ENCODE measurements at regions of chr16 and their contacts with region 1.

Region 1: GRCh38 chr16:57300387-57301125 is 16.1 kb upstream of the PLLP start:
- DNase-seq: peak; percentile 100
- ATAC-seq: peak; percentile 92
- H3K4me3 Mint-ChIP-seq: no peak overlapping the region
- H3K27ac Mint-ChIP-seq: no peak overlapping the region
- H3K4me1 Mint-ChIP-seq: peaks cover 32% of the 10 kb centered on the region
- H3K27me3 Mint-ChIP-seq: no peaks in the 10 kb centered on the region
- CTCF ChIP-seq: peak; percentile 75

Region 2: GRCh38 chr16:57091975-57092785 is 208.4 kb before region 1 on chr16 and contains the start of gene CPNE2:
- CTCF ChIA-PET with region 1: interaction called, 3 read pairs
- POLR2A ChIA-PET with region 1: no interaction called
- intact Hi-C with region 1: loop called (anchors 1 kb)
- DNase-seq: peak; percentile 52
- ATAC-seq: peak; percentile 55
- H3K4me3 Mint-ChIP-seq: peak within 1 kb of the TSS; percentile 81
- H3K27ac Mint-ChIP-seq: no peak within 1 kb of the TSS
- H3K4me1 Mint-ChIP-seq: peaks cover 13% of the 10 kb centered on the region
- H3K27me3 Mint-ChIP-seq: peaks cover 24% of the 10 kb centered on the region
- CTCF ChIP-seq: no peak
- total RNA-seq, gene CPNE2: 7.4 and 8.3 TPM in 2 replicates

Region 3: DNA sequence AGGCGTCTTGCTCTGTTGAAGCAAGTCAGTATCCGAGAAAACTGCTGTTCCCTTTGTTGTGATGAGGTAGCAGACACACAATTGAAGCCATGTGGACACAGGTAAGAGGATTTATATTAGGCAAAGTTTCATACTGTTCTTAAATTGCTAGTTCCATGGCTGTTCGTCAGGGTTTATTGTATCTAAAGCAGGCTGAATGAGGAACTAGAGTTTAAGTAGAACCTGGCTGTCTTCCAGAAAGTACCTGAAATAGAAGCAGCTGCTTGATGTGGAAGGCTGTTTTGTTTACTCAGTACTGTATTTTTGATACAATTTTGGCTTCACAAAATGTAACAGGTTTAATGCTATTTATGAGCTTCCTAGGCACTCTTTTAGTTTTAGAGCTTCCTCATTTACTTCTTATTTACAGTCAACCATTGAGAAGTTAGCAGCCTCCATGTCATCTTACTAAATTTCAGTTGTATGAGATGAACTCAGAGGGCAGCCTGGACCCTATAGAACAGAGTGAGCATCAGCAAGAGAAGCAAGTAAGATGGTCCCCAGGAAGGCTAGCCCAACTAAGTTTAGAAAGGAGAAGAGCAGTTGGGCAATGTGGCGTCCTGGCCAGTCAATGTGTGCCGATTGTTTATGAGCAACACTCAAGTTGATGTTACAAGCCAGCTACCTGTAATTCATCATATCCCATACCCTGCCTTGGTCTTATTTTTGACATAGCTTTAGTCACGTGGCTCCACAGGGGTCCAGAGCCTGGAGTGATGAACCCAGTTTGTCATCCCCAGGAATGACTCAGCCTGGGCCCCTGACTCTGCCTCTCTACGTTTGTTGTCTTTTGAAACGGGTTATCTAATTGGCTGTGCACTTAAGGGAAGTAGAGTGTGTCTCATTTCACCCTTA is 65.2 kb before region 1 on chr16:
- CTCF ChIA-PET with region 1: no interaction called
- POLR2A ChIA-PET with region 1: no interaction called
- intact Hi-C with region 1: no loop called
- DNase-seq: no peak
- ATAC-seq: peak; percentile 83
- H3K4me3 Mint-ChIP-seq: no peak overlapping the region
- H3K27ac Mint-ChIP-seq: peak overlapping the region; percentile 85
- H3K4me1 Mint-ChIP-seq: peaks cover 33% of the 10 kb centered on the region
- H3K27me3 Mint-ChIP-seq: no peaks in the 10 kb centered on the region
- CTCF ChIP-seq: no peak

Region 4: GRCh38 chr16:57341441-57342303 is 41.1 kb after region 1 on chr16:
- CTCF ChIA-PET with region 1: interaction called, 6 read pairs
- POLR2A ChIA-PET with region 1: interaction called, 4 read pairs
- intact Hi-C with region 1: loop called (anchors 1 kb)
- DNase-seq: no peak
- ATAC-seq: no peak
- H3K4me3 Mint-ChIP-seq: peak overlapping the region; percentile 67
- H3K27ac Mint-ChIP-seq: peak overlapping the region; percentile 24
- H3K4me1 Mint-ChIP-seq: peaks cover 49% of the 10 kb centered on the region
- H3K27me3 Mint-ChIP-seq: peaks cover 9% of the 10 kb centered on the region
- CTCF ChIP-seq: no peak

Region 5: GRCh38 chr16:57383276-57384247 is 83.0 kb after region 1 on chr16:
- CTCF ChIA-PET with region 1: interaction called, 3 read pairs
- POLR2A ChIA-PET with region 1: interaction called, 7 read pairs
- intact Hi-C with region 1: loop called (anchors 1 kb)
- DNase-seq: no peak
- ATAC-seq: no peak
- H3K4me3 Mint-ChIP-seq: peak overlapping the region; percentile 1
- H3K27ac Mint-ChIP-seq: peak overlapping the region; percentile 84
- H3K4me1 Mint-ChIP-seq: peaks cover 70% of the 10 kb centered on the region
- H3K27me3 Mint-ChIP-seq: no peaks in the 10 kb centered on the region
- CTCF ChIP-seq: no peak

Region 6: GRCh38 chr16:57462209-57462977 is 161.8 kb after region 1 on chr16 and contains the start of gene POLR2C:
- CTCF ChIA-PET with region 1: interaction called, 3 read pairs
- POLR2A ChIA-PET with region 1: no interaction called
- intact Hi-C with region 1: loop called (anchors 1 kb)
- DNase-seq: peak; percentile 93
- ATAC-seq: peak; percentile 97
- H3K4me3 Mint-ChIP-seq: peak within 1 kb of the TSS; percentile 100
- H3K27ac Mint-ChIP-seq: peak within 1 kb of the TSS; percentile 99
- H3K4me1 Mint-ChIP-seq: peaks cover 29% of the 10 kb centered on the region
- H3K27me3 Mint-ChIP-seq: no peaks in the 10 kb centered on the region
- CTCF ChIP-seq: peak; percentile 38
- total RNA-seq, gene POLR2C: 52.2 and 56.6 TPM in 2 replicates

Region 7: GRCh38 chr16:57648590-57649442 is 348.3 kb after region 1 on chr16:
- CTCF ChIA-PET with region 1: no interaction called
- POLR2A ChIA-PET with region 1: no interaction called
- intact Hi-C with region 1: loop called (anchors 1 kb)
- DNase-seq: peak; percentile 67
- ATAC-seq: peak; percentile 87
- H3K4me3 Mint-ChIP-seq: no peak overlapping the region
- H3K27ac Mint-ChIP-seq: no peak overlapping the region
- H3K4me1 Mint-ChIP-seq: peaks cover 25% of the 10 kb centered on the region
- H3K27me3 Mint-ChIP-seq: peaks cover 2% of the 10 kb centered on the region
- CTCF ChIP-seq: peak; percentile 85